Caco-2 (cell line): ENCODE measurements at regions of chr12 and their contacts with region 1.

Region 1: DNA sequence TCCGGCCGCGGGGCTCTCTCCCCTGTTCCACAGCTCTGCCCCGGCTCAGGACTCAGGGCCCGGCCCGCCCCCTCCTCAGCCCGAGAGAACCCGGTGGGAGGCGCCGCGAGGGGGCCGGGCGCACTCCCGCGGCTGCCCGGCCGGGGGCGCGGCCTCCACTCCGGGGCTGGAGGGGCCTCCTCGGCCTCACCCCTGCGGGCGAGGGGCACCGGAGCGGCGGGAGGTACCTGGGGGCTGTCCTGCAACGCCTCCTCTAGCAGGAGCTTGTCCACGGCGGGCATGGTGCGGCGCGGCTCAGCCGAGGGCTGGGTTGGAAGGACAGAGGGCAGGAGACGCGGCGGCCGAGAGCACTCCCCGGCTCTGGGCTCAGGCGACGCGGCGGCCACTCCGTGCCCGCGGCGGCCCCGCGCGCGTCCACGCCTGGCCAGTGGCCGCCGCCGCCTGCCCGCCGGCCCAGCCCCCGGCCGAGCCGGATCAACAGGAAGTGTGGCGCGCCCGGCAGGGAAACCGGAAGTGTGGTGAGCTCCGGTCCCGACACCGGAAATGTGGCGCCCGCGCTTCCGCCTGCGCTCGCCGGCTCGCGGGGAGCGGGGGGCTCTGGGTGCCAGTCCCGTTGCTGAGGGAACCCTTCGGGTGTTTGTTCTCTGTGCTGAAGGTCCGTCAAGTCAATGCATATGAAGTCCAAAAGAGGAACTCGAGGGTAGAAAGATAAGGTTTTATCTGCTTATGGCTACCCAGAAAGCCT is at the start of gene APPL2:
- DNase-seq: peak; percentile 89 to 90
- H3K4me3 ChIP-seq: peak within 1 kb of the TSS; percentile 53
- H3K4me3 Mint-ChIP-seq: peak within 1 kb of the TSS; percentile 79
- H3K27ac Mint-ChIP-seq: peak within 1 kb of the TSS; percentile 58
- H3K4me1 ChIP-seq: peaks cover 18% of the 10 kb centered on the region
- H3K4me1 Mint-ChIP-seq: no peaks in the 10 kb centered on the region
- H3K27me3 ChIP-seq: no peaks in the 10 kb centered on the region
- H3K27me3 Mint-ChIP-seq: no peaks in the 10 kb centered on the region
- CTCF ChIP-seq: peak; percentile 23 to 44
- total RNA-seq, gene APPL2: 49.2 and 56.0 TPM in 2 replicates

Region 2: GRCh38 chr12:105221583-105222283 is 14.2 kb before region 1 on chr12:
- CTCF ChIA-PET with region 1: interaction called, 3 read pairs
- POLR2A ChIA-PET with region 1: interaction called, 9 read pairs
- intact Hi-C with region 1: loop called (anchors 2 kb)
- DNase-seq: no peak
- H3K4me3 ChIP-seq: no peak overlapping the region
- H3K4me3 Mint-ChIP-seq: no peak overlapping the region
- H3K27ac Mint-ChIP-seq: peak overlapping the region; percentile 11
- H3K4me1 ChIP-seq: peaks cover 15% of the 10 kb centered on the region; the same call in 1 of the 2 replicates
- H3K4me1 Mint-ChIP-seq: peaks cover 30% of the 10 kb centered on the region
- H3K27me3 ChIP-seq: no peaks in the 10 kb centered on the region
- H3K27me3 Mint-ChIP-seq: no peaks in the 10 kb centered on the region
- CTCF ChIP-seq: no peak